ENCODE measurements at regions of chr14 and their contacts with region 1.

Region 1: GRCh38 chr14:35121887-35122695 is at the starts of genes PPP2R3C and PRORP:
- DNase-seq: peak; percentile 97
- H3K4me3 ChIP-seq: peak within 1 kb of the TSS; percentile 85
- H3K27ac ChIP-seq: peak within 1 kb of the TSS; percentile 81
- H3K4me1 ChIP-seq: peaks cover 38% of the 10 kb centered on the region
- CTCF ChIP-seq: no peak
- total RNA-seq, gene PPP2R3C: 50.8 and 59.4 TPM in 2 replicates
- total RNA-seq, gene PRORP: 38.7 and 52.2 TPM in 2 replicates

Region 2: GRCh38 chr14:34714320-34715126 is 407.6 kb before region 1 on chr14 and contains the start of gene CFL2:
- CTCF ChIA-PET with region 1: no interaction called
- POLR2A ChIA-PET with region 1: interaction called, 4 read pairs
- intact Hi-C with region 1: loop called (anchors 5 kb)
- DNase-seq: peak; percentile 79
- H3K4me3 ChIP-seq: peak within 1 kb of the TSS; percentile 92
- H3K27ac ChIP-seq: peak within 1 kb of the TSS; percentile 87
- H3K4me1 ChIP-seq: peaks cover 48% of the 10 kb centered on the region
- CTCF ChIP-seq: no peak
- total RNA-seq, gene CFL2: 7.1 and 19.6 TPM in 2 replicates

Region 3: GRCh38 chr14:34982417-34983147 is 139.5 kb before region 1 on chr14 and contains the start of gene SRP54:
- CTCF ChIA-PET with region 1: no interaction called
- POLR2A ChIA-PET with region 1: interaction called, 12 read pairs
- intact Hi-C with region 1: loop called (anchors 1 kb)
- DNase-seq: peak; percentile 99
- H3K4me3 ChIP-seq: peak within 1 kb of the TSS; percentile 95
- H3K27ac ChIP-seq: peak within 1 kb of the TSS; percentile 91
- H3K4me1 ChIP-seq: peaks cover 30% of the 10 kb centered on the region
- CTCF ChIP-seq: no peak
- total RNA-seq, gene SRP54: 50.9 and 53.8 TPM in 2 replicates

Region 4: DNA sequence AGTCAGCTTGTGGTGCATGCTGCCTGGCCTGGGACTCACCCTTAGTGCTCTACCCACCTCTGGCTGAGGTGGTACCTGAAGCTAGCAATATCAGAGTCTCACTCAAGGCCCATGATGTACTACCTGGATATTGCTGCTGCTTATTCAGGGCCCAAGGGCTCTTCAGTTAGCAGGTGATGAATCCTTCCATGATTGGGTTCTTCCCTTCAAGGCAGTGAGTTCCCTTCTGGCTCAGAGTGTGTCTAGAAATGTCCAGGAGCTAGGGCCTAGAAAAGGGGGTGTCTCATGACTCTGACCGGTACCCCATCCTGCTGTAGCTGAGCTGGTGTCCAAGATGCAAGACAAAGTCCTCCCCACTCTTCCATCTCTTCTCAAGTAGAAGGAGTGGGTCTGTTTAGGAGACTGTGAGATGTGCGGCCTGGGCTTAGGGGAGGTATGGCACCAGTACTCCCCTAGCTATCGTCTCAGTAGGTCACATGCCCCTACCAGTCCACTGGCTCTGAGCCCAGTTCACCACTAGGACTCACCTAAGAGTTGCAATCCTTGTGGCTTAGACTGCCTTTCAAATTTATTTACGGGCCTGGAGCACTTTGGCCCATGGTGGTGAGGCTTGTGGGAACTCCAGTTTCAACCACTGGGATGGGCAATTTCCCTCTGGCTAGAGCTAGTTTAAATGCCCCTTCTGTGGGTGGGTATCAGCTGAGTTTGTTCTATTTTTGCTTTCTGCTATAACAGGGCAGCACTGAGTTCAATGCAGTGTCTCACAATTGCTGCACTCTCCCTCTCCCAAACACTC is 12.4 kb after region 1 on chr14:
- CTCF ChIA-PET with region 1: interaction called, 5 read pairs
- POLR2A ChIA-PET with region 1: interaction called, 10 read pairs
- intact Hi-C with region 1: no loop called
- DNase-seq: no peak
- H3K4me3 ChIP-seq: no peak overlapping the region
- H3K27ac ChIP-seq: no peak overlapping the region
- H3K4me1 ChIP-seq: no peaks in the 10 kb centered on the region
- CTCF ChIP-seq: no peak

Region 5: DNA sequence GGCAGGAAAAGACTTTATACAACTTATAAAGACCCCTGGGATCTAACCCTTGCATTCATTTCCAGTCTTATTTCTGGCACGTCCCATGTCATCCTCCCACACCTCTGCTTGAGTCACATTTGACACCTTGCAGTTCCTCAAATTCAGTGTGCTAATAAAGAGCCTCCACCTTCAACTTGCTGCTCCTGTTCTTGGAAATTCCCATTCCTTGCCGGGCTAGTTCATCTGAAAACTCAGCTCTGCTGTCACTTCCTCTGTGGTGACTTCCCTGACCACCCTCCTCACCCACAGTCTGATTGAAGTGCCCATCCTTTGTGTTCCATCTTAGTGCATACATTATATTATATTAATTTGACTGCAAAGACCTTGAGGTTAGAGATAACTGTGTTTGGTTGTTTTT is 132.6 kb after region 1 on chr14:
- CTCF ChIA-PET with region 1: no interaction called
- POLR2A ChIA-PET with region 1: no interaction called
- intact Hi-C with region 1: no loop called
- DNase-seq: no peak
- H3K4me3 ChIP-seq: no peak overlapping the region
- H3K27ac ChIP-seq: no peak overlapping the region
- H3K4me1 ChIP-seq: no peaks in the 10 kb centered on the region
- CTCF ChIP-seq: no peak

Region 6: GRCh38 chr14:35808076-35808652 is 686.1 kb after region 1 on chr14:
- CTCF ChIA-PET with region 1: no interaction called
- POLR2A ChIA-PET with region 1: no interaction called
- intact Hi-C with region 1: loop called (anchors 5 kb)
- DNase-seq: peak; percentile 38
- H3K4me3 ChIP-seq: peak overlapping the region; percentile 73
- H3K27ac ChIP-seq: peak overlapping the region; percentile 83
- H3K4me1 ChIP-seq: peaks cover 19% of the 10 kb centered on the region
- CTCF ChIP-seq: no peak

Measured in OCI-LY7 (cell line).